SK-N-SH (cell line): ENCODE measurements at regions of chr6 and their contacts with region 1.

Region 1: GRCh38 chr6:127302728-127303660 is 36.3 kb downstream of the RNF146 start:
- DNase-seq: peak; percentile 31
- H3K4me3 ChIP-seq: no peak overlapping the region; a peak in 1 of 4 replicates
- H3K27ac ChIP-seq: no peak overlapping the region
- H3K4me1 ChIP-seq: peaks cover 6 to 15% of the 10 kb centered on the region in 2 experiments; a peak in 3 of 4 replicates
- H3K27me3 ChIP-seq: no peaks in the 10 kb centered on the region
- CTCF ChIP-seq: peak; percentile 84
- EP300 ChIP-seq: no peak
- RAD21 ChIP-seq: peak; percentile 75

Region 2: GRCh38 chr6:127291495-127291894 is 11.5 kb before region 1 on chr6:
- CTCF ChIA-PET with region 1: interaction called, 23 read pairs
- POLR2A ChIA-PET with region 1: no interaction called
- DNase-seq: no peak
- H3K4me3 ChIP-seq: no peak overlapping the region
- H3K27ac ChIP-seq: no peak overlapping the region
- H3K4me1 ChIP-seq: no peaks in the 10 kb centered on the region
- H3K27me3 ChIP-seq: no peaks in the 10 kb centered on the region
- CTCF ChIP-seq: no peak
- EP300 ChIP-seq: no peak
- RAD21 ChIP-seq: no peak